Activated T-helper 2 cell treated with anti-CD3 and anti-CD28 coated beads, Interferon-gamma antibody, Interleukin-2, Interleukin-4, amounts not matched to agents 10 μg/mL and 5 μg/mL and 100 μg/mL, durations not matched to agents 14 hours and 24 hours and 36 hours (primary cell): ENCODE measurements at regions of chr2 and their contacts with region 1.

Region 1: GRCh38 chr2:127526149-127527000 is at the start of gene IWS1:
- DNase-seq: peak; percentile 92
- H3K4me3 Mint-ChIP-seq: peak within 1 kb of the TSS; percentile 93
- H3K27ac Mint-ChIP-seq: peak within 1 kb of the TSS; percentile 89
- H3K4me1 Mint-ChIP-seq: peaks cover 22% of the 10 kb centered on the region
- H3K27me3 Mint-ChIP-seq: peaks cover 2% of the 10 kb centered on the region
- total RNA-seq, gene IWS1: 54.7 and 58.1 TPM in 2 replicates

Region 2: DNA sequence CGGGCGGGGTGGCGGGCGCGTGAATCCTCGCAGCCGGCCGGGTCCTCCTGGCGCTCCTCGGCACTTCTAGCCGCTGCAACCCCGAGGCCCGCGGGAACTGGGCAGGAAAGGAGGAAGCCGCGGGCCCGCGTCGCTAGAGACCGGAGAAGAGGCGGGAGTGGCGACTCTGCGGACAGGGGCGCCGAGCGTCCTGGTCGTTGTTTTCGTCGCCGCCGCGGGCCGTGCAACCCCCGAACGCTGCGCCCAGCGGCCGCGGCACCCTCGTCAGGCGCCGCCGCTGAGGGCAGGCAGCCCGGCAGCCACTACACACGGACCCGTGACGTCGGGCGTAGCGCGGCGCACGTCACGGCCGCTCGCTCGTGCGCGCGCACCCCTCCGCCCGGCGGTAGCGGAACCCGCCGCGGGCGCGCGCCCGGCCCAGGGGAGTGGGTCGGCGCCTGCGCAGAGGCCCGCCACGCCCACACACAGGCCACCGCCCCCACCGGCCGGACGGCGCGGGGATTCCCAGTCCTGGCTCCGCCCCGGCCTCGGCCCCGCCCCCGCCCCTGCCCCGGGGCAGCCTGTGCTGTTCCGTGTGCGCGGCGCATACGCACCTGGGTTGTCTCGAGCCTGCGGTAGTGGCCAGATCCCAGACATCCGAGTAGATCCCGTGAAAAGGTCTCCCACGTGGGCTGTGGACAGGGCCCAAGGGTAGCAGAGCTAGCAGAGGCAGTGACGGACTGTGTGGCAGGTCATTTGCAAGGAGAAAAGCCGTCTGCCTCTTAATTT is 138.5 kb before region 1 on chr2 and contains the start of gene MAP3K2:
- intact Hi-C with region 1: loop called (anchors 1 kb)
- DNase-seq: peak; percentile 90
- H3K4me3 Mint-ChIP-seq: peak within 1 kb of the TSS; percentile 82
- H3K27ac Mint-ChIP-seq: peak within 1 kb of the TSS; percentile 98
- H3K4me1 Mint-ChIP-seq: peaks cover 65% of the 10 kb centered on the region
- H3K27me3 Mint-ChIP-seq: no peaks in the 10 kb centered on the region
- total RNA-seq, gene MAP3K2: 49.6 and 51.3 TPM in 2 replicates

Region 3: DNA sequence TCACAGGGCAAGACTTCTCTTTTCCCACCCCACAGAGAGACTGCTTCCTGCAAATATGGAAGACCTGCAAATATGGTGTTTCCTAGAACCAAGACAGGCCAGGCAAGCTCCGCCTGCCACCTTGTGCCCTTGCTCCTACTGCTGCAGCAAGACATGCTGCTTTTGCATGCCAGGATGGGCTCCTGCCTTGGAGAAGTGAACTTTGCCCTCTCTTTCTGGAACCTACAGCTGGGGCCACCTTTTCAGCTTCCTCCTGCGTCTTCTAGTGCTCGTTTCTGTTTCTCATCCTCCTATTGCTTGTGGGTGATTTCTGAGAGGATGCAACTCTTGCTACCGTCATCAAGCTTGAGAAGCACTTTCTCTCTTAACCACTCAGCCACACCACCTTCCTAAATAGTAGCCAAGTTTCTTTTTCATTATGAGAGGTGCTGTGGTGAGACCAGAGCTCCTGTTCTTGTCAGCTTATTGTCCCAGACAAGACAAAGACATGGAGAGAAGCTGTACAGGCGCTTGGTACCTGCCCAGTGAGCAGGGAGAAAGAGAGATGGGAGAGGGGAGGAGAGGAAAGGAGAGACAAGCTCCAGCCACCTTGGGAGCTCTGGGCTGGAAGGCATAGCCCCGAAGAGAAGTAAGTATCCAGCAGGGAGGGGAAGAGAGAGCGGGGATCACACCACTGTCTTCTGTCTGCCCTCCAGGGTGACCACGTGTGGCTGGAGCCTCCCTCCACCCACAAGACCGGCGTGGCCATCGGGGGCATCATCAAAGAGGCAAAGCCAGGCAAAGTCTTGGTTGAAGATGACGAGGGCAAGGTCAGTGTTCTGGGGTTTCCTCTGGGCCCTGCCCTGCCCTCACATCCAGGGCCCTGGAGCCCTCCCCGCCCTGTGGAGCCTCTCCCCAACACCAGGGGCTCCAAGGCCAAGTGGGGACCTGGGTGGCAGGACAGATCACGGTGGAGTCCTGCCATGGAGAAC is 37.4 kb after region 1 on chr2:
- intact Hi-C with region 1: loop called (anchors 1 kb)
- DNase-seq: peak; percentile 44
- H3K4me3 Mint-ChIP-seq: peak overlapping the region; percentile 35
- H3K27ac Mint-ChIP-seq: peak overlapping the region; percentile 32
- H3K4me1 Mint-ChIP-seq: peaks cover 18% of the 10 kb centered on the region
- H3K27me3 Mint-ChIP-seq: peaks cover 39% of the 10 kb centered on the region

Region 4: DNA sequence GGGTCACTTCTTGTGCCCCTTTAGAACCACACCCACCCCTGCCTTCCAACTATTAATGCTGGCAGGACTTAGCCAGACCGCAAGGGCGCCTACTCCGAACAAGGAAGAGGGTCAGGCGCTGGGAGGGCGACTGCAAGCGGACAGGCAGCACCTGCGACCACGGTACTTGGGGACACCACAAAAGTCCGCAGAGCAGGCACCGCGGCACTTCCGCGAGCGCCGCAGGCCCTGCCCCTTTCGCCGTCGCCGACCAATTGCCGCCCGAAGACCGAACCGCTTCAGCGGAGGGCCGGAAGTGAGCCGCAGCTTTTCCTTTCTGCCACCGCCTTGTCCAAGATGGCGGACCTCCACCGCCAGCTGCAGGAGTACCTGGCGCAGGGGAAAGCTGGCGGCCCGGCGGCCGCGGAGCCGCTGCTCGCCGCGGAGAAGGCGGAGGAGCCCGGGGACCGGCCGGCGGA is 174.8 kb after region 1 on chr2 and contains the start of gene SFT2D3:
- intact Hi-C with region 1: loop called (anchors 5 kb)
- DNase-seq: peak; percentile 93
- H3K4me3 Mint-ChIP-seq: peak within 1 kb of the TSS; percentile 89
- H3K27ac Mint-ChIP-seq: peak within 1 kb of the TSS; percentile 95
- H3K4me1 Mint-ChIP-seq: peaks cover 29% of the 10 kb centered on the region
- H3K27me3 Mint-ChIP-seq: no peaks in the 10 kb centered on the region
- total RNA-seq, gene SFT2D3: 4.5 and 5.9 TPM in 2 replicates

Region 5: GRCh38 chr2:128027801-128028667 is 501.7 kb after region 1 on chr2 and contains the start of gene SAP130:
- intact Hi-C with region 1: loop called (anchors 5 kb)
- DNase-seq: peak; percentile 98
- H3K4me3 Mint-ChIP-seq: peak within 1 kb of the TSS; percentile 97
- H3K27ac Mint-ChIP-seq: peak within 1 kb of the TSS; percentile 85
- H3K4me1 Mint-ChIP-seq: peaks cover 12% of the 10 kb centered on the region
- H3K27me3 Mint-ChIP-seq: peaks cover 2% of the 10 kb centered on the region
- total RNA-seq, gene SAP130: 33.1 and 36.5 TPM in 2 replicates